Motor neuron (in vitro differentiated cells): ENCODE measurements at regions of chr3 and their contacts with region 1.

Region 1: DNA sequence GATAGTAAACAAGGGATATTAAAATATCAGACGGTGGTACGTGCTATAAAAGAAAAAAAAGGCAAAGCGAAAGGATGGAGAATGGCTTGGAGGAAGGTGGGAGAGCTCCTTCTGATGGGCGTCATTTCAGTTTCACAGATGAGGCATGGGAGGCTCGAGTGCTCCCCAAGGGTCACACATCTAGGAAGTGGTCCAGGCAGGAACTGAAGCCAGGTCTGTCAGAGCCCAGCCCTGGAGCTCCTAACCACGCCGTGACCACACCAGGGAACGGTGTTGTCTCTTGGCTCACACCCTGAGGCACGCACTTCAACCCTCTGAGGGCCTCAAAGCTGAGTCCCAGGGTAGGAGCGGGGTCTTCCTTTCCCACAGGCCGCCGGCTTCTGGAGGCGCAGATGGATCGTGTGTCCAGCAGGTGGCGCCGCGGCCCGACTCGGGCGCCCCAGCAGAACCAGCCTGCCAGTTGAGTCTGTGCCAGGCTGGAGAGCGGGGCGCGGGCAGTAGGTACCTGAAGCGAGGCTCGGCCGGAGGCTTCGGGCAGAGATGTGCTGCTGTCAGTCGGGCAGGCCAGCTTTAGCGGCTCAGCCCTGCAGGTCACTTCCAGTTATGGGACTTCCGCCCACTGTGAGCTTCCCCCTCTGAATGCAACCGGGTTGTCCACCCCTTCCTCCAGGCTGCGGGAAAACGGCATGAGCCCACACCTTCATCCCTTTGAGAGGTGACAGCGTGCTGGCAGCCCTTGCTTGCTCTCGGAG is 68.1 kb downstream of the SLC6A1 start:
- ATAC-seq: peak; percentile 71 to 89 (median 82)
- H3K4me3 ChIP-seq: peak overlapping the region in 3 of 5 donors; percentile 17 to 32 (median 28)
- H3K27ac ChIP-seq: no peak overlapping the region
- H3K4me1 ChIP-seq: no peaks in the 10 kb centered on the region

Region 2: DNA sequence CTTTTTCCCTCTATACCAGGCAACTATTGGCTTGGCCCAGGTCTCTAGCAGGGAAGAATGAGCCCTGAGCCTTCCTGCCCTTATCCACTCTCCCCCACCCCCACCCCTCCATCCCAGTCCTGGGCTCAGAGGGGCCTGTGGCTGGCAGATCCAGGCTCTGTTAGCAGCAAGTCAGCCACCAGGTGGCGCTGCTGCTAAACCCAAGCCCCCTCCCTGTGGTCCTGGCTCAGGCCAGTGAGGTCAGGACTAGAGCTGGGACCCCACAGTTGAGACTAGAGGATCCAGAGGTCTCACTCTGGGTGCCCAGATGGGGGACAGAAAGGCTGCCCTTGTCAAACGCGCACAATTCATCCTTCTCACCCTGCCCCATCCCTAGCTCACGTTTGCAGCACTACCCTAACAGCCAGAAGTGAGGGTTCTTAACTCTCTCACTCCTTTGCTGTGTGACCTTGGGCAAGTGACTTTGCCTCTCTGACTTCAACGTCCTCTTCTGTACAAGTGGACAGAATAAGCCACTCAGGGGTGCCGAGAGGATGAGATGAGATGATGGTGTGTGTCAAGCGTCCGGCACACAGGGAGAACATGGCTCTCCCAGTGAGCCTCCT is 114.9 kb before region 1 on chr3:
- in situ Hi-C with region 1: loop called in 5 of 9 experiments (anchors 10 to 25 kb)
- ATAC-seq: peak; percentile 72 to 100 (median 85)
- H3K4me3 ChIP-seq: no peak overlapping the region
- H3K27ac ChIP-seq: no peak overlapping the region
- H3K4me1 ChIP-seq: no peaks in the 10 kb centered on the region

Region 3: GRCh38 chr3:11335056-11335608 is 274.5 kb after region 1 on chr3:
- in situ Hi-C with region 1: loop called in 1 of 9 experiments (anchors 25 kb)
- ATAC-seq: peak in 6 of 8 experiments; percentile 37 to 85 (median 74)
- H3K4me3 ChIP-seq: no peak overlapping the region
- H3K27ac ChIP-seq: no peak overlapping the region
- H3K4me1 ChIP-seq: peaks cover 0 to 5% of the 10 kb centered on the region in 2 donors